CD8-positive, alpha-beta memory T cell (primary cell): ENCODE measurements at regions of chr4 and their contacts with region 1.

Region 1: GRCh38 chr4:38759113-38759789 is 23.5 kb downstream of the TLR10 start:
- DNase-seq: peak in 4 of 5 donors; percentile 13 to 68 (median 54)
- H3K4me3 ChIP-seq: no peak overlapping the region
- H3K4me3 Mint-ChIP-seq: no peak overlapping the region
- H3K27ac ChIP-seq: no peak overlapping the region
- H3K27ac Mint-ChIP-seq: no peak overlapping the region
- H3K4me1 ChIP-seq: no peaks in the 10 kb centered on the region
- H3K4me1 Mint-ChIP-seq: peaks cover 4 to 10% (median 8%) of the 10 kb centered on the region in 3 donors
- H3K27me3 ChIP-seq: no peaks in the 10 kb centered on the region
- H3K27me3 Mint-ChIP-seq: peaks cover 0 to 11% of the 10 kb centered on the region in 2 donors

Region 2: DNA sequence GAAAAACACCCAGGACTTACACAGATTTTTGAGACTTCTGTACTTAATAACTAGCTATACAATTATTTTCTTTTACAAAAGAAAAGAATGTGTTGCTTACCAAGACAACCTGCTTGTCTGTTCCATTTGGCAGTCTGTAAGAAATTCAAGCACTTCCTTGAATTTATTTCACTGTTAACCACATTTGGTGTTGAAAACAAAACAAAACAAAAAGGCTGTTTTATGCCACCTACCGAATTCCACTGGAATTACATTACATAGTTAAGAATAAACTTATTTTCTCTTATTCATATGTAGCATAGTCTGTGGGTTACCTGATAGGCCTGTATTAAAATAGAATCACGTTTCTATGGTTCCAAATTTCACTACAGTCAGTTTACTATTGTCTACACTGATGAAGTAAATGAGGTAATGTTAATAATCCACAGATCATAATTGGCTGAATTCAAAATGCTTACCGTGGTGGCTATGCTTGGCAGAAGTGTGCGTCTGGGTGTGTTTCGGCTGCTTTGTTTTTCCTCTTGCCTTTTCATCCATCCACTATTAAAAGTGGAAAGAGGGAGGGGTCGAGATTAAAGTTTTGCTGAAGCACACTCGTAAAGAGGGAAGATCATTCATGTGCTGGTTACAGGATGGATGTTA is 45.5 kb after region 1 on chr4 and contains the start of gene TLR1:
- CTCF ChIA-PET with region 1: interaction called, 44 read pairs
- POLR2A ChIA-PET with region 1: no interaction called
- DNase-seq: peak in 2 of 5 donors; percentile 47 to 57
- H3K4me3 ChIP-seq: peak within 1 kb of the TSS; percentile 61
- H3K4me3 Mint-ChIP-seq: peak within 1 kb of the TSS; percentile 83 to 92 (median 87)
- H3K27ac ChIP-seq: no peak within 1 kb of the TSS
- H3K27ac Mint-ChIP-seq: peak within 1 kb of the TSS; percentile 36 to 96 (median 93)
- H3K4me1 ChIP-seq: peaks cover 8% of the 10 kb centered on the region
- H3K4me1 Mint-ChIP-seq: peaks cover 31 to 44% (median 36%) of the 10 kb centered on the region in 3 donors
- H3K27me3 ChIP-seq: no peaks in the 10 kb centered on the region
- H3K27me3 Mint-ChIP-seq: no peaks in the 10 kb centered on the region
- total RNA-seq, gene TLR1: 1.3 to 2.1 TPM